ENCODE measurements at regions of chr3 and their contacts with region 1.

Region 1: GRCh38 chr3:172595641-172596393 is 72.6 kb upstream of the TNFSF10 start:
- DNase-seq: peak in 25 of 35 experiments; percentile 7 to 80 (median 29)
- ATAC-seq: peak; percentile 18 to 68 (median 57)
- H3K4me3 ChIP-seq: peak overlapping the region in 1 of 2 donors; percentile 15
- H3K4me3 Mint-ChIP-seq: peak overlapping the region; percentile 62 to 84 (median 81)
- H3K27ac ChIP-seq: peak overlapping the region; percentile 28
- H3K27ac Mint-ChIP-seq: peak overlapping the region; percentile 93 to 95
- H3K4me1 ChIP-seq: peaks cover 20 to 29% of the 10 kb centered on the region in 2 experiments
- H3K4me1 Mint-ChIP-seq: peaks cover 53 to 54% (median 53%) of the 10 kb centered on the region in 3 donors
- H3K27me3 ChIP-seq: no peaks in the 10 kb centered on the region
- H3K27me3 Mint-ChIP-seq: no peaks in the 10 kb centered on the region

Region 2: GRCh38 chr3:172332256-172333041 is 263.4 kb before region 1 on chr3:
- CTCF ChIA-PET with region 1: interaction called, 3 to 10 read pairs
- POLR2A ChIA-PET with region 1: no interaction called
- DNase-seq: peak in 33 of 35 experiments; percentile 8 to 74 (median 29)
- ATAC-seq: peak; percentile 70 to 79 (median 77)
- H3K4me3 ChIP-seq: no peak overlapping the region
- H3K4me3 Mint-ChIP-seq: no peak overlapping the region
- H3K27ac ChIP-seq: no peak overlapping the region
- H3K27ac Mint-ChIP-seq: no peak overlapping the region
- H3K4me1 ChIP-seq: no peaks in the 10 kb centered on the region
- H3K4me1 Mint-ChIP-seq: peaks cover 0 to 5% (median 4%) of the 10 kb centered on the region in 3 donors
- H3K27me3 ChIP-seq: no peaks in the 10 kb centered on the region
- H3K27me3 Mint-ChIP-seq: no peaks in the 10 kb centered on the region

Region 3: GRCh38 chr3:172461530-172462138 is 134.2 kb before region 1 on chr3:
- CTCF ChIA-PET with region 1: interaction called, 6 to 24 read pairs
- POLR2A ChIA-PET with region 1: interaction called, 3 to 7 read pairs
- DNase-seq: peak in 1 of 35 experiments; percentile 54
- ATAC-seq: peak in 2 of 4 experiments; percentile 39 to 63
- H3K4me3 ChIP-seq: no peak overlapping the region
- H3K4me3 Mint-ChIP-seq: no peak overlapping the region
- H3K27ac ChIP-seq: no peak overlapping the region
- H3K27ac Mint-ChIP-seq: no peak overlapping the region
- H3K4me1 ChIP-seq: no peaks in the 10 kb centered on the region
- H3K4me1 Mint-ChIP-seq: no peaks in the 10 kb centered on the region
- H3K27me3 ChIP-seq: peaks cover 0 to 2% of the 10 kb centered on the region in 2 experiments
- H3K27me3 Mint-ChIP-seq: peaks cover 2% of the 10 kb centered on the region in 2 donors

Region 4: GRCh38 chr3:172476347-172476746 is 119.5 kb before region 1 on chr3:
- CTCF ChIA-PET with region 1: interaction called, 4 to 14 read pairs
- POLR2A ChIA-PET with region 1: no interaction called
- DNase-seq: no peak
- ATAC-seq: no peak
- H3K4me3 ChIP-seq: no peak overlapping the region
- H3K4me3 Mint-ChIP-seq: peak overlapping the region; percentile 78 to 97 (median 81)
- H3K27ac ChIP-seq: no peak overlapping the region
- H3K27ac Mint-ChIP-seq: peak overlapping the region in 1 of 2 donors; percentile 18
- H3K4me1 ChIP-seq: peaks cover 0 to 4% of the 10 kb centered on the region in 2 experiments
- H3K4me1 Mint-ChIP-seq: peaks cover 15 to 17% (median 16%) of the 10 kb centered on the region in 3 donors
- H3K27me3 ChIP-seq: no peaks in the 10 kb centered on the region
- H3K27me3 Mint-ChIP-seq: peaks cover 0 to 2% of the 10 kb centered on the region in 2 donors

Region 5: GRCh38 chr3:172522871-172523818 is 72.7 kb before region 1 on chr3 and contains the start of gene TNFSF10:
- CTCF ChIA-PET with region 1: interaction called, 6 to 23 read pairs
- POLR2A ChIA-PET with region 1: interaction called in 1 of 2 experiments, 3 read pairs
- DNase-seq: peak; percentile 15 to 71 (median 39)
- ATAC-seq: peak; percentile 80 to 86 (median 82)
- H3K4me3 ChIP-seq: peak within 1 kb of the TSS; percentile 64 to 73
- H3K4me3 Mint-ChIP-seq: peak within 1 kb of the TSS; percentile 93 to 97 (median 96)
- H3K27ac ChIP-seq: peak within 1 kb of the TSS; percentile 84
- H3K27ac Mint-ChIP-seq: peak within 1 kb of the TSS; percentile 98 to 99
- H3K4me1 ChIP-seq: peaks cover 18 to 25% of the 10 kb centered on the region in 2 experiments
- H3K4me1 Mint-ChIP-seq: peaks cover 53 to 64% (median 55%) of the 10 kb centered on the region in 3 donors
- H3K27me3 ChIP-seq: no peaks in the 10 kb centered on the region
- H3K27me3 Mint-ChIP-seq: no peaks in the 10 kb centered on the region
- total RNA-seq, gene TNFSF10: 22.3 to 49.7 (median 35.8) TPM

Region 6: GRCh38 chr3:172530566-172530965 is 65.3 kb before region 1 on chr3:
- CTCF ChIA-PET with region 1: interaction called, 13 to 18 read pairs
- POLR2A ChIA-PET with region 1: no interaction called
- DNase-seq: peak in 3 of 35 experiments; percentile 4 to 49 (median 5)
- ATAC-seq: peak; percentile 77 to 82 (median 78)
- H3K4me3 ChIP-seq: no peak overlapping the region
- H3K4me3 Mint-ChIP-seq: peak overlapping the region in 1 of 3 donors; percentile 54
- H3K27ac ChIP-seq: peak overlapping the region; percentile 18
- H3K27ac Mint-ChIP-seq: peak overlapping the region; percentile 84 to 87
- H3K4me1 ChIP-seq: peaks cover 14 to 18% of the 10 kb centered on the region in 2 experiments
- H3K4me1 Mint-ChIP-seq: peaks cover 19 to 28% (median 20%) of the 10 kb centered on the region in 3 donors
- H3K27me3 ChIP-seq: no peaks in the 10 kb centered on the region
- H3K27me3 Mint-ChIP-seq: no peaks in the 10 kb centered on the region

Region 7: GRCh38 chr3:172607305-172608121 is 11.7 kb after region 1 on chr3:
- CTCF ChIA-PET with region 1: interaction called, 4 to 12 read pairs
- POLR2A ChIA-PET with region 1: no interaction called
- DNase-seq: no peak
- ATAC-seq: no peak
- H3K4me3 ChIP-seq: no peak overlapping the region
- H3K4me3 Mint-ChIP-seq: no peak overlapping the region
- H3K27ac ChIP-seq: no peak overlapping the region
- H3K27ac Mint-ChIP-seq: no peak overlapping the region
- H3K4me1 ChIP-seq: no peaks in the 10 kb centered on the region
- H3K4me1 Mint-ChIP-seq: no peaks in the 10 kb centered on the region
- H3K27me3 ChIP-seq: no peaks in the 10 kb centered on the region
- H3K27me3 Mint-ChIP-seq: no peaks in the 10 kb centered on the region